Naive thymus-derived CD4-positive, alpha-beta T cell (primary cell): ENCODE measurements at regions of chr2 and their contacts with region 1.

Region 1: GRCh38 chr2:99180755-99181623 is at the starts of genes MITD1 and MRPL30:
- DNase-seq: peak; percentile 72 to 94 (median 90)
- ATAC-seq: peak; percentile 97
- H3K4me3 ChIP-seq: peak within 1 kb of the TSS; percentile 97
- H3K4me3 Mint-ChIP-seq: peak within 1 kb of the TSS; percentile 94 to 100 (median 99)
- H3K27ac ChIP-seq: peak within 1 kb of the TSS; percentile 89
- H3K27ac Mint-ChIP-seq: peak within 1 kb of the TSS; percentile 93 to 99 (median 99)
- H3K4me1 ChIP-seq: peaks cover 30 to 32% of the 10 kb centered on the region in 2 donors
- H3K4me1 Mint-ChIP-seq: peaks cover 41 to 85% (median 74%) of the 10 kb centered on the region in 7 donors
- H3K27me3 ChIP-seq: no peaks in the 10 kb centered on the region
- H3K27me3 Mint-ChIP-seq: no peaks in the 10 kb centered on the region
- total RNA-seq, gene MITD1: 26.8 to 80.5 (median 73.8) TPM
- total RNA-seq, gene MRPL30: 16.1 to 26.0 (median 21.9) TPM

Region 2: DNA sequence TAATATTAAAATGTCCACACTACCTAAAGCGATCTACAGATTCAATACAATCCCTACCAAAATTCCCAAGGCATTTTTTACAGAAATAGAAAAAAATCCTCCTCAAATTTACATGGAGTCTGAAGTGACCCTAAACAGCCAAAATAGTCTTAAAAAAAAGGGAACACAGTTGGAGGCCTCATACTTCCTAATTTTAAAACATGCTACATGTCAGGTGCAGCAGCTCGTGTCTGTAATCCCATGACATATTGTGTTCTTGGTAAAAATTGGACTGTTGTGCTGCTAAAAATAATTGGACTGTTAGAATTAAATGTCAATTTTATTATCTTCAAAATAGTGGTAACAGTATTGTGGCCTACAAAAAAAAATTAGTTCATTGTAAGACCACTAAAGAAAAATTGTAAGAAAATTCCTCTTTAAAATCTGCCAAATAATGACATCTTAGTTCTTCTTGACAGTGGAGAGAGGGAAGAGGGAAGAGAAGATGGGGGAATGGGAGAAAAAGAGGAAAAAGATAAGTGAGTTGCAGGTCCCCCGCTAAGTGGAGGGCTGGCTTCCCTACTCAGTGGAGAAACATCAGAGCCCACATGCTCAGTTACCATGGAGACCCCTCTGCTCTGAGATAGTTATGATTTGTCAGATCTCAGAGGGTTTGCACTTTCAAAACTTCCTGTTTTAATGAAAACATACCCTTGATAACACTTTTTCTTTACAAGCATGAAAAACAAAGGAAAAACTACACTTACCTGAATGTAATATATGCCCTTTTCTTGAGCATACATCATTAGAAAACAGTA is 526.1 kb before region 1 on chr2:
- CTCF ChIA-PET with region 1: no interaction called
- POLR2A ChIA-PET with region 1: no interaction called
- intact Hi-C with region 1: loop called in 1 of 2 experiments (anchors 5 kb)
- DNase-seq: peak in 7 of 9 donors; percentile 52 to 80 (median 75)
- ATAC-seq: peak; percentile 72
- H3K4me3 ChIP-seq: peak overlapping the region; percentile 4
- H3K4me3 Mint-ChIP-seq: peak overlapping the region; percentile 40 to 81 (median 69)
- H3K27ac ChIP-seq: peak overlapping the region; percentile 79
- H3K27ac Mint-ChIP-seq: peak overlapping the region; percentile 76 to 99 (median 93)
- H3K4me1 ChIP-seq: peaks cover 64 to 85% of the 10 kb centered on the region in 2 donors
- H3K4me1 Mint-ChIP-seq: peaks cover 50 to 97% (median 88%) of the 10 kb centered on the region in 7 donors
- H3K27me3 ChIP-seq: no peaks in the 10 kb centered on the region
- H3K27me3 Mint-ChIP-seq: no peaks in the 10 kb centered on the region

Region 3: DNA sequence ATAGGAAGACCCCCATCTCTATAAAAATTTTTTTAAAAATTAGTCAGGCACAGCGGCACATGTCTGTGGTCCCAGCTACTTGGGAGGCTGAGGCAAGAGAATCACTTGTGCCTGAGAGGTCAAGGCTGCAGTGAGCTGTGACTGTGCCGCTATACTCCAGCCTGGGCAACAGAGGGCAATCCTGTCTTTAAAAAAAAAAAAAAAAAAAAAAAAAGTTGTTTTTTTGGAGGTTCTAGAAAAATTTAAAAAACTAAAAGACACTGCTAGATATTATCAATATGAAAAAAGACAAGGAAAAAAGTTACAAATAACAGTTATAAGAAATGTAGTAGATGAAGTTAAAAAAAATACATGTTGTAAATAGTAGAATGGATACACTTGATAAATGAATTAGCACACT is 95.6 kb before region 1 on chr2:
- CTCF ChIA-PET with region 1: no interaction called
- POLR2A ChIA-PET with region 1: no interaction called
- intact Hi-C with region 1: loop called (anchors 1 to 5 kb)
- DNase-seq: peak in 4 of 9 donors; percentile 1 to 7 (median 4)
- ATAC-seq: no peak
- H3K4me3 ChIP-seq: no peak overlapping the region
- H3K4me3 Mint-ChIP-seq: no peak overlapping the region
- H3K27ac ChIP-seq: no peak overlapping the region
- H3K27ac Mint-ChIP-seq: no peak overlapping the region
- H3K4me1 ChIP-seq: peaks cover 0 to 7% of the 10 kb centered on the region in 2 donors
- H3K4me1 Mint-ChIP-seq: peaks cover 0 to 6% (median 4%) of the 10 kb centered on the region in 7 donors
- H3K27me3 ChIP-seq: no peaks in the 10 kb centered on the region
- H3K27me3 Mint-ChIP-seq: peaks cover 0 to 28% (median 6%) of the 10 kb centered on the region in 5 donors

Region 4: DNA sequence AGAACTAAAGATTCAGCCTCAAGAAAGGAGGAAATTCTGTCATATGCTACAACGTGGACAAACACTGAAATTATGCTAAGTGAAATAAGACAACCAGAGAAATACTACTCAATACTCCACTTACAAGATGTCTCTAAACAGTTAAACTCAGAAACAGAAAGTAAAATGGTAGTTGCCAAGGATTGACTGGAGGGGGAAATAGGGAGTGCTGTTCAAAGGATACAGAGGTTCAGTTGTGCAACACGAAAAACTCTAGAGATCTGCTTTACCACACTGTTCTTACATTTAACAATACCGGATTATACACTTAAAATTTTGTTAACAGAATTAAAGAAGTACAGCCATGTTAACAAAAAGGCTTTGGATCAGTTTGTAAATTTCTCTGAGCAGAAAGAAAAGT is 79.3 kb before region 1 on chr2:
- CTCF ChIA-PET with region 1: no interaction called
- POLR2A ChIA-PET with region 1: no interaction called
- intact Hi-C with region 1: no loop called
- DNase-seq: no peak
- ATAC-seq: no peak
- H3K4me3 ChIP-seq: no peak overlapping the region
- H3K4me3 Mint-ChIP-seq: no peak overlapping the region
- H3K27ac ChIP-seq: no peak overlapping the region
- H3K27ac Mint-ChIP-seq: peak overlapping the region in 7 of 9 donors; percentile 5 to 63 (median 38)
- H3K4me1 ChIP-seq: no peaks in the 10 kb centered on the region
- H3K4me1 Mint-ChIP-seq: peaks cover 0 to 9% (median 8%) of the 10 kb centered on the region in 7 donors
- H3K27me3 ChIP-seq: no peaks in the 10 kb centered on the region
- H3K27me3 Mint-ChIP-seq: no peaks in the 10 kb centered on the region

Region 5: GRCh38 chr2:99154643-99155536 is 26.1 kb before region 1 on chr2 and contains the starts of genes LIPT1 and TSGA10:
- CTCF ChIA-PET with region 1: interaction called, 7 read pairs
- POLR2A ChIA-PET with region 1: interaction called, 31 read pairs
- intact Hi-C with region 1: loop called (anchors 1 kb)
- DNase-seq: peak; percentile 80 to 95 (median 92)
- ATAC-seq: peak; percentile 98
- H3K4me3 ChIP-seq: peak within 1 kb of the TSS; percentile 83
- H3K4me3 Mint-ChIP-seq: peak within 1 kb of the TSS in 1 of 10 donors; percentile 93
- H3K27ac ChIP-seq: peak within 1 kb of the TSS; percentile 92
- H3K27ac Mint-ChIP-seq: peak within 1 kb of the TSS in 2 of 9 donors; percentile 96 to 97
- H3K4me1 ChIP-seq: peaks cover 15 to 18% of the 10 kb centered on the region in 2 donors
- H3K4me1 Mint-ChIP-seq: peaks cover 25 to 57% (median 42%) of the 10 kb centered on the region in 7 donors
- H3K27me3 ChIP-seq: no peaks in the 10 kb centered on the region
- H3K27me3 Mint-ChIP-seq: no peaks in the 10 kb centered on the region
- total RNA-seq, gene LIPT1: 7.7 to 24.1 (median 15.9) TPM
- total RNA-seq, gene TSGA10: 3.5 to 31.7 (median 12.6) TPM

Region 6: DNA sequence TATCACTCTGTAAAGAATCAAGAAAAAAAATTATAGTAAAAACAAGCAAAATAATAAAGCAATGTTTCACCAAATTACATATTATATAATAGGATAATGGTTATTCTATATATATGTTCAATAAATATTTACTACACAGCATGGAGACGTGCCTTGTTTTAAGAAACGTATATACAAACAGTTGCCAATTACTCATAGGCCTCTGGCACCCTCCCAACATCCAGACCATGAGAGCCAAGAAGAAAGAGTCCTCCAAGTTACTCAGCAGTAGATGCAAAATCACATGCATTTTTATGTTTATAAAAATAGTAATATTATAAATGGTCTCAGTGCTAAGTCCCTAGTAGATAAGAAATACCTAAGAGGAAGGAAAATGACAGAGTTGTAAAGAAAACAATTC is 244.0 kb after region 1 on chr2:
- CTCF ChIA-PET with region 1: no interaction called
- POLR2A ChIA-PET with region 1: no interaction called
- intact Hi-C with region 1: no loop called
- DNase-seq: no peak
- ATAC-seq: no peak
- H3K4me3 ChIP-seq: no peak overlapping the region
- H3K4me3 Mint-ChIP-seq: no peak overlapping the region
- H3K27ac ChIP-seq: no peak overlapping the region
- H3K27ac Mint-ChIP-seq: no peak overlapping the region
- H3K4me1 ChIP-seq: no peaks in the 10 kb centered on the region
- H3K4me1 Mint-ChIP-seq: no peaks in the 10 kb centered on the region
- H3K27me3 ChIP-seq: no peaks in the 10 kb centered on the region
- H3K27me3 Mint-ChIP-seq: no peaks in the 10 kb centered on the region